Dorsolateral prefrontal cortex (tissue), 120 donors: ENCODE measurements at regions of chr3 and their contacts with region 1.

Region 1: DNA sequence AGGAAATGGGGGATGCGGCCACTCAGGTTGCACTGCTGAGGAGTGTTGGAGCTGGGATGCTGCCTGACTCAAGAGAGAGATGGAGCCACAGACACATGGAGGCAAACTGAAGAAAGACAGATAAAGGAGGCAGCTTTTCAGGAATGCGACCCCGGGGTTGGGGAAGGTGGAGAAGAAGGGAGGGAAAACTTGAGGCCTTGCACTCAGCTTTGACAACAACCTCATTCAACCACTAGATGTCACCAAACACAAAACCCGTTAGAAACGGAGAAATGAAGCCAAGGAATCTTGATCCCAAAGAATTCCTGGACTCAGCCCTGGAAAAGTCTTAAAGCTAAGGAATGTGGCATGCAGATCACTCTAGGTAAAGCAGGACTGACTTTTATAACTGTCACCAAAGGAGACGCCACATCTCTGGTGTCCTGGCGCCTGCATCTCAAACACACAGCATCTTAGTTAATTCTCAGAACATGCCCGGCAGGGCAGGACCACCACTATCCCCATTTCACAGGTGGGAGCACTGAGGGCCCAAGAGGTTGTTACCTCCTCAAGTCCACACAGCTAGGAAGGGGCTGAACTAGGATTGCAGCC is 59.6 kb upstream of the LMCD1 start:
- DNase-seq: no peak
- H3K4me3 ChIP-seq: no peak overlapping the region
- H3K27ac ChIP-seq: no peak overlapping the region
- H3K27me3 ChIP-seq: no peaks in the 10 kb centered on the region
- CTCF ChIP-seq: peak; percentile 46 to 90 (median 79)

Region 2: DNA sequence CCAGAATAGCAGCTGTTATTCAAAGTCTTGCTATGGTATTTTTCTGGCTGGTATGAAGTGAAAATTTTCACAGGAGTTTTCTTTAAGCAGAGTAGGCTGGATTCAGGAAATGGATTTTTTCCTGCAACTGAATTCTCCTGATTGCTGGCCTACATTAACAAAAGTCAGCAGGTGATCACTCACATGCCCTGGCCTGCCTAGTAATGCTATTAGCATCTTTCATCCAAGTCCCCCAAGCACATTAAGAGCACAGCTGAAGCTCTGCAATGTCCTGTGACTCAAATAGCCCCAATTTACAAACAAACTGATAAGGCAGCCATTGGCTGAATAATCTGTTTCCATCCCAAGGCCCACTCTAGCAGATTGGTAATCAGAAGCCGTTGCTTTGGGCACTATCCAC is 628.7 kb before region 1 on chr3:
- intact Hi-C with region 1: no loop called
- DNase-seq: no peak
- H3K4me3 ChIP-seq: no peak overlapping the region
- H3K27ac ChIP-seq: no peak overlapping the region
- H3K27me3 ChIP-seq: no peaks in the 10 kb centered on the region
- CTCF ChIP-seq: no peak

Region 3: DNA sequence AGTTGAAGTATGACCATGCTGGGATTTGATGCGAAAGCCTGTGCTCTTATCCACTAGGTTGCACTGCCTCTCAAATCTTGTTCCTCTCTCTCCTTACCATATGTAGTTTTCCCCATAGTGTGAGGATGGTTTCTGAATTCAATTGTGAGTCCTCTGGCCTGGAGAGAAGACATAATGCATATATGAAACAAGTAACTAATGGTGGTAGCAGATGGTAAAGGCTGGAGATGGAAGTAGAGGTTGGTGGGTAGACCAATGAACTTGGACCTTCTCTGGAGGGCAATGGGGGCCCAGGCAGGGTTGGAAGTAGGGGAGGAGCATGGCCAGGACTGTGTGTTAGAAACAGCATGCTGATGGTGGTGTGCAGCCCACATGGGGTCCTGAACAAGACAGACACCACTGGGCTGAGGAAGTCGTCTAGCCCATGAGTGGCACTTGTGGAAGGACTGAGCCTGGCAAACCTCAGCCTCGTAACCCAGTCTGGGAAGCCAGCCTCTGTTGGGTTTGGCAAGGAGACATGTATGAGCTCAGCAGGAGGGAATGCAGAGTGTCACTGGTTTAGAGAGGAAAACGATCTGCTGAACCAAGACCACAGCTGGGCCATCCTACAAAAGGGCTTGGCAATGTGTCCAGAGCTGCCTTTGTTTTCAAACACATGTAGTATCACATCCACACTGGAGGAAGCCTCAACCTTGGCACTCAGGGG is 41.0 kb after region 1 on chr3:
- intact Hi-C with region 1: loop called in 1 of 2 experiments (anchors 5 kb)
- DNase-seq: peak in 9 of 10 donors; percentile 31 to 80 (median 63)
- H3K4me3 ChIP-seq: no peak overlapping the region
- H3K27ac ChIP-seq: peak overlapping the region in 17 of 59 donors; percentile 5 to 63 (median 31)
- H3K27me3 ChIP-seq: no peaks in the 10 kb centered on the region
- CTCF ChIP-seq: no peak

Region 4: DNA sequence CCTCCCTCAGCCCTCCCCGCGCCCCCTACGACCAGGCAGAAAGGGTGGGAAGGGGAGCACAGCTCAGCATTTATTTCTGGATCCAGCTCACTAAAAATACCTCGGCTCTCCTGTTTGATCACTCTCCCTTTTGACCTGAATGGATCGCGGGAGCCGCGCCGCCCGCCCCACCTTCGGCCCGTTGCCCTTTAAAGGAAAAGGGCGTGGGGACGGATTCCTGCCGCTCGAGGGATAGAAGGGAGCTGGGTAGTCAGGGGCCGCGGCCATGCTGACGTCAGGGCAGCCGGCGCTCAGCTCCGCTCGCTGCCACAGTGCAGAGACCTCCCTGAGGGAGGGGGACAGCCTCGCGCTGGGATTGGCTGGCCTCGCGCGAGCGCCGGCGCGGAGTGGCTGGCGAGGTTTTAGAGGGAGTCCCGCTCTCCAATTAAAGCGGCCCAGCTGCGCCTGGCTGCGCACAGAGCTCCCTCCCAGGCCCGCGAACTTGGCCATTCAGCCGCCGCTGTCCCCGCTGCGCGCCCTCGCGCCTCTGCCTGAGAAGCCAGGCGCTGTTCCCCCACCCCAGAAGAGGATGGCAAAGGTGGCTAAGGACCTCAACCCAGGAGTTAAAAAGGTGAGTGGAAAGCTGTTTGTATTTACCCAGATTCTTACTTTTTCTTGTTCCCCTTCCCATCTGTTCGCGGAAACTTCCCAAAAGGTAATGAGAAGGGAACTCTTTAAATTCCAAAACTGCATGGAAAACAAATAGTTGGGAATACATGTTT is 59.5 kb after region 1 on chr3 and contains the start of gene LMCD1:
- intact Hi-C with region 1: loop called (anchors 2 to 10 kb)
- DNase-seq: peak; percentile 85 to 99 (median 96)
- H3K4me3 ChIP-seq: peak within 1 kb of the TSS; percentile 51 to 94 (median 76)
- H3K27ac ChIP-seq: peak within 1 kb of the TSS; percentile 82 to 97 (median 94)
- H3K27me3 ChIP-seq: no peaks in the 10 kb centered on the region
- CTCF ChIP-seq: peak in 38 of 56 donors; percentile 9 to 54 (median 30)
- total RNA-seq, gene LMCD1: 4.2 to 25.9 (median 8.8) TPM

Region 5: GRCh38 chr3:8607234-8608040 is 165.4 kb after region 1 on chr3:
- intact Hi-C with region 1: loop called (anchors 5 kb)
- DNase-seq: peak in 4 of 10 donors; percentile 18 to 55 (median 46)
- H3K4me3 ChIP-seq: no peak overlapping the region
- H3K27ac ChIP-seq: no peak overlapping the region
- H3K27me3 ChIP-seq: no peaks in the 10 kb centered on the region
- CTCF ChIP-seq: peak in 54 of 56 donors; percentile 25 to 72 (median 54)

Region 6: GRCh38 chr3:8622873-8623691 is 181.0 kb after region 1 on chr3:
- intact Hi-C with region 1: loop called (anchors 2 kb)
- DNase-seq: peak; percentile 31 to 81 (median 69)
- H3K4me3 ChIP-seq: peak overlapping the region in 15 of 59 donors; percentile 3 to 46 (median 27)
- H3K27ac ChIP-seq: no peak overlapping the region
- H3K27me3 ChIP-seq: no peaks in the 10 kb centered on the region
- CTCF ChIP-seq: peak; percentile 75 to 98 (median 93)

Region 7: DNA sequence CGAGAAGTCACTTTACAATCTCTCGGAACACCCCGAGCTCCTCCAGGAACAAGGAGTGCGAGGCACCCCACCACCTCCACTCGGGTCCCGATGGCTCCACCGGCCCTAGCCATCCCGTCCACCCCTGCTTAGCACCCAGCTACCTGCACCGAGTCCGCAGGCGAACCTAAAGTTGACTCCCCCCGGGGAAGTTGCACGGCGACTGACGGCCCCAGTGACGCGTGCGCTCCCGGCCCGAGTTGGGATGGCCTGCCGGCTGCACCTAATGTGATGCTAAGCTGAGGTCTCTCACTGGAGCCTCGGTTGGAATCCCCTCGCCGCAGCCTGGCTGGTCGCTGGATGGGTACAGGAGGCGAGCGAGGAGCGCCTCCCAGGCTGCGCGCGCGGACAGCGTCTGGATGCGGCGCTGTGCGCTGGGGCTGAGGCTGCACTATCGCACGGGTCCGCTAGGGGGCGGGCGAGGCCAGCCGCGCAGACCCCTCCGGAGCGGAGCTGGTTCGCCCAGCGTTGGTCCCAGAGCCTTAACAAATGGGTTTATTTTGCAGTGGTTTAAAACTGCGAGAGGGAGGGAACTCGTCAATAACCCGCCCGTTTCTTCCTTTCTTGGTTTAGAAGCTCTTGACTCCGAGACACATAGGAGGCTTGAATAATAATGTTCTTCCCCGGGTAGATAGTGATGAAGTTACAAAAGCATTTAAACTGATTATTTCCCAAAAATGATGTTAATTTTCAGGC is 327.2 kb after region 1 on chr3 and contains the start of gene OXTR:
- intact Hi-C with region 1: loop called in 1 of 2 experiments (anchors 10 kb)
- DNase-seq: peak in 9 of 10 donors; percentile 52 to 86 (median 61)
- H3K4me3 ChIP-seq: peak within 1 kb of the TSS in 58 of 59 donors; percentile 8 to 75 (median 53)
- H3K27ac ChIP-seq: peak within 1 kb of the TSS in 3 of 59 donors; percentile 0 to 5 (median 2)
- H3K27me3 ChIP-seq: peaks cover 0 to 54% (median 29%) of the 10 kb centered on the region in 45 donors
- CTCF ChIP-seq: peak; percentile 91 to 100 (median 98)
- total RNA-seq, gene OXTR: 1.7 to 35.3 (median 6.5) TPM